ENCODE measurements at regions of chr5 and their contacts with region 1.

Region 1: GRCh38 chr5:55172051-55172899 is 702 bp downstream of the CDC20B start:
- DNase-seq: peak; percentile 30 to 90 (median 56)
- ATAC-seq: peak; percentile 71
- H3K4me3 ChIP-seq: peak overlapping the region; percentile 57 to 59
- H3K4me3 Mint-ChIP-seq: peak overlapping the region; percentile 85
- H3K27ac ChIP-seq: no peak overlapping the region
- H3K27ac Mint-ChIP-seq: no peak overlapping the region
- H3K4me1 ChIP-seq: peaks cover 30% of the 10 kb centered on the region
- H3K4me1 Mint-ChIP-seq: peaks cover 32% of the 10 kb centered on the region
- H3K27me3 ChIP-seq: peaks cover 28 to 30% of the 10 kb centered on the region in 2 experiments
- H3K27me3 Mint-ChIP-seq: peaks cover 63% of the 10 kb centered on the region
- CTCF ChIP-seq: peak; percentile 70

Region 2: GRCh38 chr5:55159763-55160492 is 12.3 kb before region 1 on chr5 and contains the start of gene GPX8:
- CTCF ChIA-PET with region 1: interaction called, 29 read pairs
- POLR2A ChIA-PET with region 1: no interaction called
- intact Hi-C with region 1: no loop called
- DNase-seq: peak in 3 of 9 experiments; percentile 32 to 73 (median 64)
- ATAC-seq: peak; percentile 79
- H3K4me3 ChIP-seq: no peak within 1 kb of the TSS
- H3K4me3 Mint-ChIP-seq: no peak within 1 kb of the TSS
- H3K27ac ChIP-seq: no peak within 1 kb of the TSS
- H3K27ac Mint-ChIP-seq: no peak within 1 kb of the TSS
- H3K4me1 ChIP-seq: no peaks in the 10 kb centered on the region
- H3K4me1 Mint-ChIP-seq: no peaks in the 10 kb centered on the region
- H3K27me3 ChIP-seq: no peaks in the 10 kb centered on the region
- H3K27me3 Mint-ChIP-seq: peaks cover 19% of the 10 kb centered on the region
- CTCF ChIP-seq: peak; percentile 73
- total RNA-seq, gene GPX8: not detected

Region 3: GRCh38 chr5:55254802-55255201 is 82.5 kb after region 1 on chr5:
- CTCF ChIA-PET with region 1: no interaction called
- POLR2A ChIA-PET with region 1: no interaction called
- intact Hi-C with region 1: loop called (anchors 5 kb)
- DNase-seq: no peak
- ATAC-seq: no peak
- H3K4me3 ChIP-seq: no peak overlapping the region
- H3K4me3 Mint-ChIP-seq: no peak overlapping the region
- H3K27ac ChIP-seq: no peak overlapping the region
- H3K27ac Mint-ChIP-seq: no peak overlapping the region
- H3K4me1 ChIP-seq: no peaks in the 10 kb centered on the region
- H3K4me1 Mint-ChIP-seq: no peaks in the 10 kb centered on the region
- H3K27me3 ChIP-seq: no peaks in the 10 kb centered on the region
- H3K27me3 Mint-ChIP-seq: no peaks in the 10 kb centered on the region
- CTCF ChIP-seq: no peak

Region 4: GRCh38 chr5:55344392-55344992 is 172.2 kb after region 1 on chr5:
- CTCF ChIA-PET with region 1: no interaction called
- POLR2A ChIA-PET with region 1: no interaction called
- intact Hi-C with region 1: loop called in 1 of 2 experiments (anchors 10 kb)
- DNase-seq: peak; percentile 36 to 73 (median 64)
- ATAC-seq: peak; percentile 76
- H3K4me3 ChIP-seq: no peak overlapping the region
- H3K4me3 Mint-ChIP-seq: no peak overlapping the region
- H3K27ac ChIP-seq: no peak overlapping the region
- H3K27ac Mint-ChIP-seq: no peak overlapping the region
- H3K4me1 ChIP-seq: no peaks in the 10 kb centered on the region
- H3K4me1 Mint-ChIP-seq: no peaks in the 10 kb centered on the region
- H3K27me3 ChIP-seq: no peaks in the 10 kb centered on the region
- H3K27me3 Mint-ChIP-seq: no peaks in the 10 kb centered on the region
- CTCF ChIP-seq: peak; percentile 97

Region 5: DNA sequence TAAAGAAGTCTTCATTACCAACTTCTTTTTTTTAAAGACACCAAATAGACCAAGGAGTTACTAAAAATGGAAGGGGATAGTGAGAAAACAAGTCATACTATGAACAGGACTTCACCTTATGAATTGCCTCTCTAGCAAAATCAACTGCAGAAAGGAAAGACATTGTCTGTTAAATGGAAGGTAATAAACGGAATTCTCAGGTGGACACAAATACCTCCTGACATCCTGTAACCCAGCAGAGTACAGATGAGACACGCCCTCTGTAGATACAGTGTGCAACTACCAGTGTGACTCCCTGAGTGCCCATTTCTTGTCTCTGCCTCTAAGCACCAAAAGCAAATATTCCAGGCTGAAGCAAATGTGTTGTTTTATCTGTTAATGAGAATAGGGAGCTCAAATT is 374.7 kb after region 1 on chr5:
- CTCF ChIA-PET with region 1: no interaction called
- POLR2A ChIA-PET with region 1: no interaction called
- intact Hi-C with region 1: no loop called
- DNase-seq: no peak
- ATAC-seq: no peak
- H3K4me3 ChIP-seq: no peak overlapping the region
- H3K4me3 Mint-ChIP-seq: no peak overlapping the region
- H3K27ac ChIP-seq: no peak overlapping the region
- H3K27ac Mint-ChIP-seq: no peak overlapping the region
- H3K4me1 ChIP-seq: peaks cover under 1% of the 10 kb centered on the region
- H3K4me1 Mint-ChIP-seq: peaks cover 4% of the 10 kb centered on the region
- H3K27me3 ChIP-seq: no peaks in the 10 kb centered on the region
- H3K27me3 Mint-ChIP-seq: peaks cover 3% of the 10 kb centered on the region
- CTCF ChIP-seq: no peak

Region 6: GRCh38 chr5:55691265-55692105 is 519.2 kb after region 1 on chr5:
- CTCF ChIA-PET with region 1: interaction called, 6 read pairs
- POLR2A ChIA-PET with region 1: no interaction called
- intact Hi-C with region 1: loop called (anchors 1 to 2 kb)
- DNase-seq: peak in 2 of 9 experiments; percentile 33 to 52
- ATAC-seq: peak; percentile 65
- H3K4me3 ChIP-seq: no peak overlapping the region
- H3K4me3 Mint-ChIP-seq: no peak overlapping the region
- H3K27ac ChIP-seq: no peak overlapping the region
- H3K27ac Mint-ChIP-seq: no peak overlapping the region
- H3K4me1 ChIP-seq: no peaks in the 10 kb centered on the region
- H3K4me1 Mint-ChIP-seq: peaks cover 2% of the 10 kb centered on the region
- H3K27me3 ChIP-seq: no peaks in the 10 kb centered on the region
- H3K27me3 Mint-ChIP-seq: no peaks in the 10 kb centered on the region
- CTCF ChIP-seq: peak; percentile 62

Region 7: DNA sequence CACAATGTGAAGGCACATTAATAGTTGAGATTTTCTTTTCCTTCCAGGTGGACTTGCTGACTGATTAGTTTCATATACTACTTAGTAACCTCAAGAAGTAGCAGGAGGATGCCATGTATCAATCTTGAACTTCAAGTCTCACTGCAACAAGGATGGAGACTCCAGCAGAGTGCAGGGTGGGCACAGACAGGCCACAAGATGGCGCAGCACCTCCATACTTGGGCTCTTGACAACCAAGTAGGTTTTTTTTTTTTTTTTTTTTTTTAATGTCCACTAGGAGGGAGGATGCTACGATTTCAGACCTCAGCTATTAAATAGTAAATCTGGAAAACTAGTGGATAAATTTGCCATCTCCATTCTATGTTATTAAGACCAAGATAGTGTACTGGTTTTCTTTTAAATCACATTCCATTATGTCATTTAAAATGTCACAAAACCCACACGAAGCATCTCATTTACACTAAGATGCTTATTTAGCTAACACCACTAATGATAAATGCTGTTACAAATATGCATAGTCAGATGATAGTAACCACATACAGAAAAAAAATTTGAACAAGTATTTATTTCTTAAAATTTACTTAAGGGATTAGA is 763.9 kb after region 1 on chr5:
- CTCF ChIA-PET with region 1: no interaction called
- POLR2A ChIA-PET with region 1: no interaction called
- intact Hi-C with region 1: loop called in 1 of 2 experiments (anchors 10 kb)
- DNase-seq: peak; percentile 53 to 87 (median 80)
- ATAC-seq: peak; percentile 92
- H3K4me3 ChIP-seq: no peak overlapping the region
- H3K4me3 Mint-ChIP-seq: no peak overlapping the region
- H3K27ac ChIP-seq: no peak overlapping the region
- H3K27ac Mint-ChIP-seq: peak overlapping the region; percentile 55
- H3K4me1 ChIP-seq: no peaks in the 10 kb centered on the region
- H3K4me1 Mint-ChIP-seq: peaks cover 10% of the 10 kb centered on the region
- H3K27me3 ChIP-seq: no peaks in the 10 kb centered on the region
- H3K27me3 Mint-ChIP-seq: no peaks in the 10 kb centered on the region
- CTCF ChIP-seq: peak; percentile 86

Region 8: DNA sequence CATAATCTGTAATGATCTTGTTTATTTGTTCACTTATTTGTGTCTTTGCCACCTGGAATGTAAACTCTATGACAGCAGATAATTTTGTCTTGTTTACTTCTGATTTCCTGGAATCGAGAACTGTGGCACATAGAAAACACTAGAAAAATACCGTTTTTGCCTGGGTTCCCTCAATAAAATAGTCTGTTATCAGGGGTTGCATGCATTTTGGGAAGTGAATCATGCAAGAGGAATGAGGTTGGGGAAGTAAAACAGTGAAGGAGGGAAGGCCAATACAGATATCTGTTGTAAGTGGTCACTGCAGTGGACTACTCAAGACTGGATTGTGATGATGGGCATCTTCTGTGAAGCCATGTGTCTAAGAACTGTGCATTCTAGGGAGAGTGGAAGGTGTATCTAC is 867.7 kb after region 1 on chr5:
- CTCF ChIA-PET with region 1: no interaction called
- POLR2A ChIA-PET with region 1: no interaction called
- intact Hi-C with region 1: no loop called
- DNase-seq: no peak
- ATAC-seq: no peak
- H3K4me3 ChIP-seq: no peak overlapping the region
- H3K4me3 Mint-ChIP-seq: no peak overlapping the region
- H3K27ac ChIP-seq: no peak overlapping the region
- H3K27ac Mint-ChIP-seq: no peak overlapping the region
- H3K4me1 ChIP-seq: peaks cover 10% of the 10 kb centered on the region
- H3K4me1 Mint-ChIP-seq: peaks cover 20% of the 10 kb centered on the region
- H3K27me3 ChIP-seq: no peaks in the 10 kb centered on the region
- H3K27me3 Mint-ChIP-seq: no peaks in the 10 kb centered on the region
- CTCF ChIP-seq: no peak